ENCODE measurements at regions of chr21 and their contacts with region 1.

Region 1: GRCh38 chr21:26715878-26716506 is 129.2 kb downstream of the ADAMTS1 start:
- ATAC-seq: peak; percentile 40 to 92 (median 73)
- H3K4me3 ChIP-seq: no peak overlapping the region
- H3K27ac ChIP-seq: no peak overlapping the region
- H3K4me1 ChIP-seq: peaks cover 0 to 7% of the 10 kb centered on the region in 2 donors

Region 2: DNA sequence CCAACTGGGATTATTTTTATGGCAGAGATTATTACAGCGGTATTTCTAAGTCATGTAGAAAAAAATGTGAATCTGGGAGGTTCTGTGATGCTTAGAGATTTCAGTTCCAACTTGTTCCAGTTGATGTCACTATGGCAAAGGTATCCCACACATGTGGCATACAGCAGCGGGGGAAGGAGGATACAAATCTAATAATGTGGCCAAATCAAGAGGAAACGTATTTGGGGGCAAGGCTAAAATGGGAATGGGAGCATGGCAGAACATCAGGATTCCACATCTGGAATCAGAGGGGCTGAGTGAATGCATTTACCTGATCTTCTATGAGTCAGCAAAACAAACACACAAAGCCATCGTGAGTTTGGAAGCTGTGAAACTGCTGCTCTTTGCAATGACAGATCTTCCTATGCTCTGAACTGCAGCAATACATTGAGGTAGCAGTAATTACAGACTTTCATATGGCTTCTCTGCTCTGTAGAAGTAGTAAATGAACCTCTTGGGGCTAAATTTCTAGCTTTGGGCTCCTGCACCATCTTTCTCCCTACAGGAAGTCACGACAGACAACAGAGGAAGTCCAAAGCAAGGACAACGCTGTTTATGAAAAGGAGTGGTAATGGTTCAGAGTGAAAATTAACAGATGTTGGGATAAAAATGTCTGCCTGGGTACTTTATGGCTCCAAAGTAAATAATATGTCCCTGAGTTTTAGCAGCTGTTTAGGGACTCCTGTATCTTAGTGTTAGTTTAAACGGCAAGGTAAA is 925.7 kb before region 1 on chr21:
- in situ Hi-C with region 1: loop called in 1 of 9 experiments (anchors 25 kb)
- ATAC-seq: peak; percentile 66 to 92 (median 83)
- H3K4me3 ChIP-seq: no peak overlapping the region
- H3K27ac ChIP-seq: no peak overlapping the region
- H3K4me1 ChIP-seq: peaks cover 0 to 7% of the 10 kb centered on the region in 2 donors

Region 3: GRCh38 chr21:25881525-25882376 is 834.2 kb before region 1 on chr21:
- in situ Hi-C with region 1: loop called in 1 of 9 experiments (anchors 25 kb)
- ATAC-seq: peak in 6 of 8 experiments; percentile 5 to 68 (median 50)
- H3K4me3 ChIP-seq: no peak overlapping the region
- H3K27ac ChIP-seq: no peak overlapping the region
- H3K4me1 ChIP-seq: peaks cover 0 to 2% of the 10 kb centered on the region in 2 donors

Region 4: DNA sequence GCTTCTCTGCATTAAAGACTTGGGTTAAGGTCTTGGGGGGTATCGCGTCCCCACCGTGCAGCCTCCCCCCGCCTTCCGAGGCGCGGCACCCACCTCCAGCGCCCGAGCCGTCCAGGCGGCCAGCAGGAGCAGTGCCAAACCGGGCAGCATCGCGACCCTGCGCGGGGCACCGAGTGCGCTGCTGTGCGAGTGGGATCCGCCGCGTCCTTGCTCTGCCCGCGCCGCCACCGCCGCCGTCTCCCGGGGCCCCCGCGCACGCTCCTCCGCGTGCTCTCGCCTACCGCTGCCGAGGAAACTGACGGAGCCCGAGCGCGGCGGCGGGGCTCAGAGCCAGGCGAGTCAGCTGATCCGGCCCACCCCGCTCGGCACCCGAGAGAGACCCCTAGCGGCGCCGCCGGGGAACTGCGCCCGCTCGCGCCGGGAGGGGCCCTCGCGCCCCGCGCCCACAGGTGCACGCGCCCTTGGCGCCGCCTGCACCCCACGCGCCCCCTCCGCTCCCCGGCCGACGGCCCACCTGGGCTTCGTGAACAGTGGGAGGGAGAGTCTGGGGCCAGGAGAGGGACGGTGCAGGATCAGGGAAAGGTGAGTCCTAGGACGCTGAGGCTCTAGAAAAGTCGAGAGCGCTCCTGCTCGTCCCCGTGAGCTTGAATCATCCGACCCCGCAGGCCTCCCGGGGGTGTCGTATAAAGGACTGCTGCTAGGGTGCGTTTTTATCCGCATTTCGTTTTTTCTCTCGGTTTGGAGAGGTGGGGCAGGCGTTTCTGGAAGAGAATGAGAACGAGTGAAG is 545.3 kb before region 1 on chr21 and contains the start of gene APP:
- in situ Hi-C with region 1: loop called in 4 of 9 experiments (anchors 25 kb)
- ATAC-seq: peak; percentile 62 to 85 (median 80)
- H3K4me3 ChIP-seq: peak within 1 kb of the TSS; percentile 66 to 94 (median 86)
- H3K27ac ChIP-seq: peak within 1 kb of the TSS; percentile 86
- H3K4me1 ChIP-seq: peaks cover 14 to 18% of the 10 kb centered on the region in 2 donors
- total RNA-seq, gene APP: 252 to 1,066 (median 518) TPM

Region 5: GRCh38 chr21:26177187-26177586 is 538.8 kb before region 1 on chr21:
- in situ Hi-C with region 1: loop called in 4 of 9 experiments (anchors 25 kb)
- ATAC-seq: peak; percentile 59 to 98 (median 74)
- H3K4me3 ChIP-seq: no peak overlapping the region
- H3K27ac ChIP-seq: no peak overlapping the region
- H3K4me1 ChIP-seq: peaks cover 7 to 11% of the 10 kb centered on the region in 2 donors

Region 6: DNA sequence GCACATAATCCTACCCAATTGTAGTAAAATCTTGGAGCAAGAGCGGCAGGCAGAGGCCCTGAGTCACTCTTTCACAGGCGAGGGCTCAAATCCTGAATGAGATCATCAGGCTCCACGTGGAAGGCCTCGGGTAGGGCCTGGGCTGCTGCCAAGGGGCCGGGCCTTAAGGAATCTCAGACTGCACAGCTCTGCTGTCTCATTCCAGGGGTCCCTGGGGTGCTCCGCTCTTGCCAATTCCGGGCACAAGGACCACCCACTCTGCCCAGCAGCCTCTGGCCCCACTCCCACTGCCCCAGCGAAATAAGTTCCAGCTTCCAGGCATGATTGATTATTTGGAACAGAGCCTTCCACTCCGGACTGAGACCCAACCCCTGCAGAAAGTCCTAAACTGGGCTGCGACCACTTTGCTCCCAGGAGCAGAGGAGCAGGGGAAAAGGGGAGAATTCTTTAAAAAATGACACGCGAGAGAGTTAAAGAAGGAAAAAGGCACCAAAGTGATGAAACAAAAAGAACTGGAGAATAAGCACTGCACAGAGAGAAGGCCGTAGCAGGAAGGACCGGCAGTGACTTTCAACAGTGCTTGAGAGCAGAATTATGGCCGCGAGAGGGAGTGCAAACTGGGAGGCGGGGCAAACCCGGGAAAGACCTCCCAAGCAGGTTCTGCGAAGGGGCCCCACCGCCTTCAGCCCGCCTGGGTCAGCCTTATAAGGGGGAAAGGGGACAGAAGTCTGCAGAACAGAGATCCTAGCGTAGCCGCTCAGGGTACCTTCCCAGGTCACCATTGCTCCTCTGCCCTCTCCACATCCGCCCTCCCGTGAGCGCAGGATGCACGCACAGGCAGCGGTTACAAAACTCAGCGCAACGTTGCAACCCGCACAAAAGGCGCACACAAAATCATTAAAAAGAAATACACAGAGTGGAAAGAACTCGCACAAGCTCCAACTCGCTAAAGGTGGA is 127.3 kb after region 1 on chr21:
- in situ Hi-C with region 1: no loop called
- ATAC-seq: peak; percentile 38 to 64 (median 54)
- H3K4me3 ChIP-seq: peak overlapping the region; percentile 47 to 89 (median 75)
- H3K27ac ChIP-seq: peak overlapping the region; percentile 90
- H3K4me1 ChIP-seq: peaks cover 8% of the 10 kb centered on the region in 2 donors